ENCODE measurements at regions of chr1 and their contacts with region 1.

Region 1: GRCh38 chr1:28782011-28782410 is 30.0 kb upstream of the OPRD1 start:
- DNase-seq: no peak
- ATAC-seq: no peak
- H3K4me3 ChIP-seq: no peak overlapping the region
- H3K27ac ChIP-seq: no peak overlapping the region
- H3K4me1 ChIP-seq: no peaks in the 10 kb centered on the region
- CTCF ChIP-seq: no peak
- EP300 ChIP-seq: no peak
- POLR2A ChIP-seq: no peak
- RAD21 ChIP-seq: no peak

Region 2: DNA sequence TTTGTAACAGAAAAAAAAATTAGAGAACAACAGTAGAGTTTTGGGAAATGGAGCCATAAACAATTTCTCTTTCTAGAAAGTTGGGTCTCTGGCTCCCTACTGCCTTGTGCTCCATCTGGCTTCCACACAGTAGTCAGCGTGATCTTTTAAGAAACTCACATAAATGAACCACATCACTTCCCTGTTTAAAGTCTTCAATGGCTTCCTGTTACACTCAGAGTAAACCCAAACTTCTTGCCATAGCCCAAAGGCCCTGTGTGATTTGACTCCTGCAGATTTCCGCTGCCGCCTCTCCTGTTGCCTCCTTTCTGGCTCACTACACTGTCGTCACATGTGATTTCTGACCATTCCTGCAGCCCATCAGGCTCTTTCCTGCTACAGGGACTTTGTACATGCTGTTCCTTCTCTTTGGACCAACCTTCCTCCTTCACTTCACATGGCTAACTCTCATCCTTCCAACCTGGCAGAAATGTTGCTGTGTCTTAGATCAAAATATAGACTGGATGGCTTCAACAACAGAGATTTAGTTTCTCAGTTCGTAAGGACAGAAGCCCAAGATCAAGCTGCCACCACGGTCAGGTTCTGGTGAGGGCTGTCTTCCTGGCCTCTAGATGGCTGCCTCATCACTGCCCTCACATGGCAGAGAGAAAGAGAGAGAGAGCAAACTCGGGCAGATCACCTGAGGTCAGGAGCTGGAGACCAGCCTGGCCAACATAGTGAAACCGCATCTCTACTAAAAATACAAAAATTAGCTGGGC is 64.0 kb after region 1 on chr1:
- CTCF ChIA-PET with region 1: interaction called, 12 read pairs
- POLR2A ChIA-PET with region 1: no interaction called
- DNase-seq: peak in 1 of 2 experiments; percentile 50
- ATAC-seq: peak; percentile 90 to 95
- H3K4me3 ChIP-seq: no peak overlapping the region
- H3K27ac ChIP-seq: no peak overlapping the region
- H3K4me1 ChIP-seq: no peaks in the 10 kb centered on the region
- CTCF ChIP-seq: peak; percentile 11; the same call in 1 of the 3 replicates
- EP300 ChIP-seq: no peak
- POLR2A ChIP-seq: no peak
- RAD21 ChIP-seq: peak in 1 of 2 experiments; percentile 29; a peak in 2 of 5 replicates

Measured in A549 (cell line).